GM10248 (cell line): ENCODE measurements at regions of chr10 and their contacts with region 1.

Region 1: GRCh38 chr10:100562008-100562711 is 26.4 kb downstream of the HIF1AN start:
- DNase-seq: peak; percentile 84
- CTCF ChIP-seq: peak; percentile 87

Region 2: DNA sequence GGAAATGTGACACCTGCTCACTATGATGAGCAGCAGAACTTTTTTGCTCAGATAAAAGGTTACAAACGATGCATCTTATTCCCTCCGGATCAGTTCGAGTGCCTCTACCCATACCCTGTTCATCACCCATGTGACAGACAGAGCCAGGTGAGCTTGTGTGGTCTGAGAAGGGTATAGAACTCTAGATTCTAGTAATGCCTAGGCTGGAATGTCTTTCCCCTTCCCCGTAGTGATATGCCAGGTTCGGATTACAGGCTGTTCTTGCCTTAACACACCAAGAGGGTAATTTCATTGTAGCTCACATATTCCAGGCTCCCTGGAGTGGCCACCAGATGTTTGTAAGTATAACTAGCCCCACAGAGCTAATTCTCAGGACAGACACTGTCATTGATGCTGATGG is 17.2 kb before region 1 on chr10:
- CTCF ChIA-PET with region 1: interaction called, 17 read pairs
- POLR2A ChIA-PET with region 1: no interaction called
- DNase-seq: no peak
- CTCF ChIP-seq: no peak

Region 3: DNA sequence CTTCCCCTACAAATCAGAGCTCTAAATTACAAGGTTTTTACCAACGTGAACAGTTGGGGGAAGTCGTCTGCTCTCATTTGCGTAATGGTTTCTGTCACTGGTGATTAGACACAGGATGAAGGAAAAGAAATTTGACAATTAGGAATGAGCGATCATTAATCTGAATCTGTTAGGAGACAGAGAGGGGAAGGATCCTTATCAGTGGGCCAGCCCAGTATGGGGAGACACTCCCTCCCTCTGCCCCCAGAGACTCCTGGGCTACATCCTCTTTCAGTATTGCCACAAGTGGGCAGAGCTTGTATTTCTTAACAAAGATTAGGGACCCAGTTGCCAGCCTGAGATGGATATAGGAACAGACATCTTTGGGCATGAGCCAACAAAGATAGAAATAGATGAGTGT is 11.0 kb before region 1 on chr10:
- CTCF ChIA-PET with region 1: interaction called, 17 read pairs
- POLR2A ChIA-PET with region 1: no interaction called
- DNase-seq: no peak
- CTCF ChIP-seq: no peak